Posterior vena cava (tissue), 2 donors: ENCODE measurements at regions of chr12 and their contacts with region 1.

Region 1: GRCh38 chr12:55940065-55940732 is 9.2 kb downstream of the DGKA start:
- DNase-seq: peak; percentile 93

Region 2: GRCh38 chr12:55743116-55743921 is 196.9 kb before region 1 on chr12 and contains the start of gene GDF11:
- intact Hi-C with region 1: loop called in 1 of 2 experiments (anchors 5 kb)
- DNase-seq: peak; percentile 87
- total RNA-seq, gene GDF11: 8.4 to 11.0 TPM

Region 3: GRCh38 chr12:55812088-55812487 is 128.1 kb before region 1 on chr12:
- intact Hi-C with region 1: loop called in 1 of 2 experiments (anchors 5 kb)
- DNase-seq: no peak

Region 4: DNA sequence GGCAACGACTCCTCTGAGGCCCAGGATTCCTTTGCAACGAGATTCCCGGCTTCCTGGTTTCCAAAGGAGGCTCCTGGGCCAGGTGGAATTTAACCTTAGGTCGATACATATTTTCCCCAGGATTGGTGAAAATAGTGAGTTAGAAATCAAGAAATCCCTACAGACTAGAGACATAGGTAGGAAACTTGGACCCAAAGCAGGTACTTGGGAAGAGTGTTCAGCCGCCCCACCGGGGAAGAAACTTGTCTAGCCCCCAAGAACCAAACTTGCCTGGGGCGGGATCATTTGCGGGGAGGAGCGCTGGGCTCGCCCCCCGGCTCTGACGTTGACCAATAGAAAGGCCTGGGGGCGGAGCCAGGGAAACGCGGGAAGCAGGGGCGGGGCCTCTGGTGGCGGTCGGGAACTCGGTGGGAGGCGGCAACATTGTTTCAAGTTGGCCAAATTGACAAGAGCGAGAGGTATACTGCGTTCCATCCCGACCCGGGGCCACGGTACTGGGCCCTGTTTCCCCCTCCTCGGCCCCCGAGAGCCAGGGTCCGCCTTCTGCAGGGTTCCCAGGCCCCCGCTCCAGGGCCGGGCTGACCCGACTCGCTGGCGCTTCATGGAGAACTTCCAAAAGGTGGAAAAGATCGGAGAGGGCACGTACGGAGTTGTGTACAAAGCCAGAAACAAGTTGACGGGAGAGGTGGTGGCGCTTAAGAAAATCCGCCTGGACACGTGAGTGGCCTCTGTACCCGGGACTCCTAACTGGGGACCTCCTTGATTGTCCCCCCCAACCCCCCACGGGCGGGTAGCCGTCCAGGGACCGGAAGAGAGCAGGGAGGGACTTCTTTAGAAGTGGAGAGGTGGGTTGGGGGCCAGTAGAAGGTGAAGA is 26.4 kb after region 1 on chr12 and contains the start of gene CDK2:
- intact Hi-C with region 1: loop called in 1 of 2 experiments (anchors 2 kb)
- DNase-seq: peak; percentile 97
- total RNA-seq, gene CDK2: 17.7 to 22.8 TPM